ENCODE measurements at regions of chr9 and their contacts with region 1.

Region 1: DNA sequence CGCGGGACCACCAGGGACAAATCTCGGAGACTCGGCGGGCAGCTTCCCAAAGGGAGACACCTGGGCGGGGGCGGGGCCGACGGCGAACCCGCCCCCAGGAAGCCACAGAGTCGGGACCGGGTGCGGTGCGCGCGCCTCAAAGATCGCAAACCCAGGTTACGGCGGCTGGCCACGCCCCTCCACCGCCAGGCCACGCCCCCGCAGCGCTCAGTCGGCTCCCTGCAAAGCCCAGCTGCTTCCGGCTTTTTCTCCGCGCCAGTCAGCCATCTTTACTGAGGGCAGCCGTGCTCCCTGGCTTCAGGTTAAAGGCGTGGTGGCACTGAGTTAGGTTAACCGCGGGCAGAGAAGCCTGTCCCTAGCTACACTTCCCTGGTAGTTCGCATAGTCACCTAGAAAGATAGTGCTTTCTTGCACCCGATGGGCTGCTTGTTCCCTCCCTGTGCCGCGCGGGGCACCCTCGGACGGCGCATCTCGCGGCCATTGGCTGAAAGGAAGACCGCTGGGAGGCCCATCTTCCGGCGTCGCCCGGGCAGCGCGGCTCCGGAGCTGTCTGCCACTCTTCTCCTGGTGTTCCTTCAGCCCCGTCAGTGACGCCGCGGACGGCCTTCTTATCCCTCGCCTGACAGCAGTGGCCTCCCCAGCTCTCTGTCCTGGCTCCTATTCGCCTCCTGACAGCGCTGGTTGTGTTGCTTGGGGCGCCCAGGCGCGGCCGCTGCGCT is at the start of gene TBC1D2:
- DNase-seq: peak; percentile 99
- total RNA-seq, gene TBC1D2: 6.9 to 10.5 TPM

Region 2: GRCh38 chr9:97921959-97922724 is 333.6 kb before region 1 on chr9 and contains the start of gene TRMO:
- intact Hi-C with region 1: loop called in 1 of 2 experiments (anchors 10 kb)
- DNase-seq: peak; percentile 99
- total RNA-seq, gene TRMO: 7.0 to 8.7 TPM

Region 3: DNA sequence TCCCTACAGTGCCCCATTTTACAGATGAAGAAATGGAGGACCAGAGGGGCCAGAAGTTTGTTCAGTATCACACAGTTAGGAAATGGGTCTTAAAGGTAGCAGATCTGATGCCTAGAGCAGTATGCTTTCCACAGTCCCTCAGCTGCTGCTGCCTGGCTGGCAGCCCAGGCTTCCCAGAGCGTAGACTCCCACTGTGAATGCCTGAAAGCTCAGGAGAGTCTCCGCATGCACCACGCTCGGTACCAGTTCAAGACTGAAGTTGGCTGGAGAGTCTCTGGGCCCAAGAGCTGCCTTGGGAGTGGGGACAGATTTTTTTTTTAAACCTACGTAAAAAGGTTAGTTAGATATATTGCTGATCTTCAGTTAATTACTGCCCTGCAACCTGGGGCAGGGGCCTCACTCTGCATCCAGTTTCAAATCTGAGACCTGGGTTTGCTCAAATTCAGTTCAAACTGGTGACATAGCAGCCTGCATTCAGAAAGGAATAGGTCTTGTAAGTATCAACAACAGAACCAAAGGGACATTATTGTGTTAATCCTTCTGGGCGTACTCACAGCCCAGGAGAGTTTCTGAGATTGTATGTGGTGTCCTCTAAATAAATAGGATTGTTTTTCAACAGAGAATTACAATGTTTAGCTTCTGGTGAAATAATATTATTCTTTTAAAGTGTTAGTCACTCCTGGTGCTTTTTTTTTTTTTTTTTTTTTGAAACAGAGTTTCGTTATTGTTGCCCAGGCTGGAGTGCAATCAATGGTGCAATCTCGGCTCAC is 190.9 kb before region 1 on chr9:
- intact Hi-C with region 1: loop called in 1 of 2 experiments (anchors 10 kb)
- DNase-seq: no peak

Region 4: GRCh38 chr9:98214811-98215210 is 40.9 kb before region 1 on chr9:
- intact Hi-C with region 1: loop called in 1 of 2 experiments (anchors 5 kb)
- DNase-seq: no peak

Region 5: GRCh38 chr9:98276907-98277469 is 21.3 kb after region 1 on chr9:
- intact Hi-C with region 1: loop called in 1 of 2 experiments (anchors 1 kb)
- DNase-seq: no peak

Region 6: DNA sequence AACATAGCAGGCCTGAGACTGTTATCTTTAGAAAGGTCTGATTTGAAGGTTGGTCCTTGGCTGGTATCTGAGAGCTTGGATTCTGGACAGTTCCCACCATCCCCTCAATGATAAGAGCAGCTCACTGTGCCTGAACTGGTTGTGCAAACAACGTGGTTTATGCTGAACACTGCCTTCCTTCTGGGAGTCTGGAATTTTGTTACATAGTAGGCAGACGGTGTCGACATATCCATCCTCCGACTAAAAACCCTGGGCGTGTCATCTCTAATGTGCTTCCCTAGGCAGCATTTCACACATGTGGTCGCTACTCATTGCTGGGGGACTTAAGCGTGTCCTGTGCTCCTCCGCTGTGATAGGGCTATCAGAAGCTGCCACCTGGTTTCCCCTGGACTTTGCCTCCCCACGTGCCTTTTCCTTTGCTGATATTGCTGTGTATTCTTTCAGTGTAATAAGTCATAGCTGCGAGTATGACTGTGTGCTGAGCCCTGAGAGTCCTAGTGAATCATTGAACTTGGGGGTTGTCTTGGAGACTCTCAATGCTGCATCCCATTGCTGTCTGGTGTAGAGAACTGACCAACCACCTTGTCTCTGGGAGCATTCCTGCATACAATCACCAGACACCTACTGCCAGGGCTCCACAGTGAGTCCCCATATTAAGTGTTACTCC is 118.8 kb after region 1 on chr9:
- intact Hi-C with region 1: no loop called
- DNase-seq: no peak

Measured in posterior vena cava (tissue), 2 donors.